H1 (cell line): ENCODE measurements at regions of chr6 and their contacts with region 1.

Region 1: GRCh38 chr6:36623547-36624459 is 29.6 kb downstream of the SRSF3 start:
- DNase-seq: peak; percentile 63 to 96
- H3K4me3 ChIP-seq: no peak overlapping the region
- H3K27ac ChIP-seq: no peak overlapping the region
- H3K4me1 ChIP-seq: peaks cover 0 to 2% (median 0%) of the 10 kb centered on the region in 4 experiments; a peak in 1 of 7 replicates
- H3K27me3 ChIP-seq: no peaks in the 10 kb centered on the region
- CTCF ChIP-seq: peak; percentile 88 to 95 (median 94)
- EP300 ChIP-seq: no peak
- POLR2A ChIP-seq: no peak
- RAD21 ChIP-seq: peak; percentile 95 to 96

Region 2: GRCh38 chr6:36576561-36576960 is 47.2 kb before region 1 on chr6:
- CTCF ChIA-PET with region 1: no interaction called
- POLR2A ChIA-PET with region 1: no interaction called
- DNase-seq: no peak
- H3K4me3 ChIP-seq: no peak overlapping the region
- H3K27ac ChIP-seq: no peak overlapping the region
- H3K4me1 ChIP-seq: no peaks in the 10 kb centered on the region
- H3K27me3 ChIP-seq: no peaks in the 10 kb centered on the region
- CTCF ChIP-seq: no peak
- EP300 ChIP-seq: no peak
- POLR2A ChIP-seq: no peak
- RAD21 ChIP-seq: no peak

Region 3: GRCh38 chr6:36666726-36667591 is 43.2 kb after region 1 on chr6:
- CTCF ChIA-PET with region 1: interaction called, 16 read pairs
- POLR2A ChIA-PET with region 1: no interaction called
- DNase-seq: peak in 1 of 2 experiments; percentile 60
- H3K4me3 ChIP-seq: peak overlapping the region in 1 of 4 experiments; percentile 20; a peak in 2 of 8 replicates
- H3K27ac ChIP-seq: peak overlapping the region; percentile 70
- H3K4me1 ChIP-seq: peaks cover 2 to 23% (median 12%) of the 10 kb centered on the region in 4 experiments
- H3K27me3 ChIP-seq: no peaks in the 10 kb centered on the region
- CTCF ChIP-seq: no peak
- EP300 ChIP-seq: no peak
- POLR2A ChIP-seq: 0 out of 3 replicates have a peak, but pooled peaks of 1 of the 2 experiments have one; percentile 21
- RAD21 ChIP-seq: no peak

Region 4: DNA sequence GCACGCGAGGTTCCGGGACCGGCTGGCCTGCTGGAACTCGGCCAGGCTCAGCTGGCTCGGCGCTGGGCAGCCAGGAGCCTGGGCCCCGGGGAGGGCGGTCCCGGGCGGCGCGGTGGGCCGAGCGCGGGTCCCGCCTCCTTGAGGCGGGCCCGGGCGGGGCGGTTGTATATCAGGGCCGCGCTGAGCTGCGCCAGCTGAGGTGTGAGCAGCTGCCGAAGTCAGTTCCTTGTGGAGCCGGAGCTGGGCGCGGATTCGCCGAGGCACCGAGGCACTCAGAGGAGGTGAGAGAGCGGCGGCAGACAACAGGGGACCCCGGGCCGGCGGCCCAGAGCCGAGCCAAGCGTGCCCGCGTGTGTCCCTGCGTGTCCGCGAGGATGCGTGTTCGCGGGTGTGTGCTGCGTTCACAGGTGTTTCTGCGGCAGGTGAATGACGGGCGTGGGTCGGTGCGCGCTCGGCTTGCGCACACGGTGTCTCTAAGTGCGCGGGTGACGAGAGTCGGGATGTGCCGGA is 54.8 kb after region 1 on chr6 and contains the start of gene CDKN1A:
- CTCF ChIA-PET with region 1: interaction called, 25 read pairs
- POLR2A ChIA-PET with region 1: interaction called, 4 read pairs
- DNase-seq: peak in 1 of 2 experiments; percentile 84
- H3K4me3 ChIP-seq: peak within 1 kb of the TSS; percentile 55 to 76 (median 69)
- H3K27ac ChIP-seq: no peak within 1 kb of the TSS; the same call in 1 of the 2 replicates
- H3K4me1 ChIP-seq: peaks cover 5 to 36% (median 16%) of the 10 kb centered on the region in 4 experiments
- H3K27me3 ChIP-seq: peaks cover 6 to 28% (median 20%) of the 10 kb centered on the region in 4 experiments
- CTCF ChIP-seq: no peak
- EP300 ChIP-seq: no peak
- POLR2A ChIP-seq: peak in 1 of 2 experiments; percentile 82; a peak in 2 of 3 replicates
- RAD21 ChIP-seq: no peak
- total RNA-seq, gene CDKN1A: 14.5 and 15.2 TPM in 2 replicates

Region 5: GRCh38 chr6:36701401-36701991 is 77.7 kb after region 1 on chr6:
- CTCF ChIA-PET with region 1: interaction called, 52 read pairs
- POLR2A ChIA-PET with region 1: no interaction called
- DNase-seq: no peak
- H3K4me3 ChIP-seq: no peak overlapping the region
- H3K27ac ChIP-seq: no peak overlapping the region
- H3K4me1 ChIP-seq: no peaks in the 10 kb centered on the region
- H3K27me3 ChIP-seq: no peaks in the 10 kb centered on the region
- CTCF ChIP-seq: peak; percentile 74 to 88 (median 85)
- EP300 ChIP-seq: no peak
- POLR2A ChIP-seq: no peak
- RAD21 ChIP-seq: peak; percentile 89 to 92

Region 6: DNA sequence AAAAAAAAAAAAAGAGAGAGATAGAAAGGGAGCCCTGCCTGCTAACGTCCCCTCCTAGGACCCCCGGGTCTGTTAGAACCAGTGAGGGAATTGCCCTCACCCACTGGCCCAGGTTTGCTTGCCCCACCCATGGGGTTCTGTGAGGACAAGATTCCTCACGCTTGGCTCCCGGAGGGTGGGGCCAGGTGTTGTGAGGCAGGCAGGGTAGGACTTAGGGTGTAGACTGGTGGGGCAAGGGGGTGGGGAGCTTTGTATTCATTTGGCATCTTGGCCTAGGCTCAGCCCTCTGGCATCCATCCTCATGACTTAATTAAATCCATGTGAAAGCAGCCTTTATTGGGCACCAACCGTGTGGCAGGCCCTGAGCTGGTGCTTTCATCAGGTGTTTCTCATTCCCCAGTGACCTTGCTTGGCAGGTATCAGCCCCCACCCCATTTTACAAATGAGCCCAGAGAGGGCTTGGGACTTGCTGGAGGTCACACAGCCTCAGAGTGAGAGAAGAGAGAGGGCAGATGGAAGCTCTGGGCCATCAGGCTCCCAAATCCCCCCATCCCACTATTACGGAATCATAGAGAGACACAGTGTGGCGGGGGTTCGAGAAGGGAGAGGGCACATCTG is 92.8 kb after region 1 on chr6:
- CTCF ChIA-PET with region 1: interaction called, 10 read pairs
- POLR2A ChIA-PET with region 1: no interaction called
- DNase-seq: no peak
- H3K4me3 ChIP-seq: no peak overlapping the region
- H3K27ac ChIP-seq: no peak overlapping the region
- H3K4me1 ChIP-seq: peaks cover 0 to 9% (median 6%) of the 10 kb centered on the region in 4 experiments; a peak in 5 of 7 replicates
- H3K27me3 ChIP-seq: no peaks in the 10 kb centered on the region
- CTCF ChIP-seq: no peak
- EP300 ChIP-seq: no peak
- POLR2A ChIP-seq: no peak
- RAD21 ChIP-seq: no peak

Region 7: GRCh38 chr6:36724514-36725390 is 100.9 kb after region 1 on chr6:
- CTCF ChIA-PET with region 1: interaction called, 30 read pairs
- POLR2A ChIA-PET with region 1: no interaction called
- DNase-seq: peak; percentile 49 to 86
- H3K4me3 ChIP-seq: no peak overlapping the region
- H3K27ac ChIP-seq: no peak overlapping the region
- H3K4me1 ChIP-seq: no peaks in the 10 kb centered on the region; a peak in 1 of 7 replicates
- H3K27me3 ChIP-seq: no peaks in the 10 kb centered on the region
- CTCF ChIP-seq: peak in 2 of 3 experiments; percentile 80; a peak in 3 of 4 replicates
- EP300 ChIP-seq: no peak
- POLR2A ChIP-seq: no peak
- RAD21 ChIP-seq: peak; percentile 83 to 84